Activated CD8-positive, alpha-beta T cell treated with anti-CD3 and anti-CD28 coated beads for 36 hours (primary cell): ENCODE measurements at regions of chr6 and their contacts with region 1.

Region 1: GRCh38 chr6:14734416-14735340 is 511.2 kb upstream of the JARID2 start:
- DNase-seq: peak; percentile 67
- ATAC-seq: peak; percentile 40
- H3K4me3 Mint-ChIP-seq: peak overlapping the region; percentile 56
- H3K27ac Mint-ChIP-seq: peak overlapping the region; percentile 93
- H3K4me1 Mint-ChIP-seq: peaks cover 96% of the 10 kb centered on the region
- H3K27me3 Mint-ChIP-seq: no peaks in the 10 kb centered on the region
- CTCF ChIP-seq: no peak

Region 2: DNA sequence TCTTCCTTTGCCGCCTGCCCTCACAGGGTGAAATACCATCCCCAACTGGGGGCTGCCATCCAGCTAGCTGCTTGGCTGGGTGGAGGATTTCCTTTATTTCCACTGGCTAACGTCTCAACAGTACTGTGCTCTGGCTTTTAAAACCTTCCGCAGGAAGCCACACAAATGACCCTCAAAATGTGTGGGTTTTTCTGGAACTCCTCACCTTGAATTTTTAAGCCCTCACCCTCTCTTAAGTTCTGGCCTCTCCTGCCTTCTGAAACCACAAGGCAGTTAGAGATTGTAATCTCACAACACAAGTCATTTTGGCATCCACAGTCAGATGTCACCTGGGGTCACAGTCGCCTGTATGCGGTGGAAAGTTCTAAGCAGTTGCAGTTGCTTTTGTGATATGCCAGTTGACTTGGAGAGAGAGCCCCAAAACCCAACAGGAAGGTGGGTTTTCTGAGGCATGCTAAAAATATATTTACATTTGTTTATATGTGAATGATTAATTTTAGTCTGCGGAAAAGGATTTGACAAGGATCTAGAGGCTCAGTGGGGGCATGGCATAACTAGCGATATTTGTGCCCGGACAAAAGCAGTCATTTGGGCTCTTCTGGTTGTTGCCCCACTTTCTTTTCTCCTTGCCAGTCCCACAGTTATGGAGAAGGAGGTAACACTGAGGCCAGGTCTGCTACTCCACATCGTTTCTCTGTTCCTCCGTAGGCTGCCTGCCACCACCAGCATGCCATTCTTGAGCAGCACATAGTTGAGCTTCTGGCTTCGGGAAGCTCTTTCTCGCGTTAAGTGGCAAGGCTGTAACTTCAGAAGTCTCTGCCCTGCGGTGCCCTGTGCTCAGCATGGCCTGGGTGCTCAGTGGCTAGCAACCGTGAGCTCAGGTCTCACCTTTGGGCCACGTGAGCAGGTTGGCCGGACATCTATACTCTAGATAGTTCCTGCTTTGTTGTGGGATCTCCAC is 281.8 kb before region 1 on chr6:
- CTCF ChIA-PET with region 1: no interaction called
- POLR2A ChIA-PET with region 1: no interaction called
- intact Hi-C with region 1: loop called (anchors 5 kb)
- DNase-seq: peak; percentile 88
- ATAC-seq: peak; percentile 78
- H3K4me3 Mint-ChIP-seq: peak overlapping the region; percentile 15
- H3K27ac Mint-ChIP-seq: peak overlapping the region; percentile 66
- H3K4me1 Mint-ChIP-seq: peaks cover 63% of the 10 kb centered on the region
- H3K27me3 Mint-ChIP-seq: no peaks in the 10 kb centered on the region
- CTCF ChIP-seq: no peak

Region 3: GRCh38 chr6:14747881-14748520 is 13.3 kb after region 1 on chr6:
- CTCF ChIA-PET with region 1: interaction called, 4 read pairs
- POLR2A ChIA-PET with region 1: interaction called, 27 read pairs
- intact Hi-C with region 1: no loop called
- DNase-seq: peak; percentile 71
- ATAC-seq: peak; percentile 18
- H3K4me3 Mint-ChIP-seq: peak overlapping the region; percentile 15
- H3K27ac Mint-ChIP-seq: peak overlapping the region; percentile 88
- H3K4me1 Mint-ChIP-seq: peaks cover 55% of the 10 kb centered on the region
- H3K27me3 Mint-ChIP-seq: no peaks in the 10 kb centered on the region
- CTCF ChIP-seq: no peak

Region 4: DNA sequence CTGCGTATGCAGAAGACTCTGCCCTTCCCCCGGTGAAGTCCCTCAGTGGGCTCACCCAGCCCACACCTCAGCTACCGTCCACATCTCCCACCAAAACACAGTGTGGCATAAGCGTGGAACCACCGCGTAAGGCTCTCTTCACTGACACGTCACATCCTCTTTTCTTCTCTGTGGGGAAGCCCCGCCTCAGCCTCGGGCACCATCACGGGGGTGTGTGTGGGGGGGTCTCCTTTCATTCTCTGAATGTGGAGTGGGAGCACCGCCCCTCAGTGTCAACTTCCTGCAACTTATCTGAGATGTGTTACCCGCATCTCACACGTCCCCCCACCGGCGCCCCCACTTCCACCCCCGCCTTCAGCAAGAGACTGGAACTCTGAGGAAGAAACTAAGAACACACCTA is 122.8 kb after region 1 on chr6:
- CTCF ChIA-PET with region 1: no interaction called
- POLR2A ChIA-PET with region 1: interaction called, 3 read pairs
- intact Hi-C with region 1: loop called (anchors 5 kb)
- DNase-seq: peak; percentile 93
- ATAC-seq: peak; percentile 90
- H3K4me3 Mint-ChIP-seq: peak overlapping the region; percentile 18
- H3K27ac Mint-ChIP-seq: peak overlapping the region; percentile 88
- H3K4me1 Mint-ChIP-seq: peaks cover 52% of the 10 kb centered on the region
- H3K27me3 Mint-ChIP-seq: no peaks in the 10 kb centered on the region
- CTCF ChIP-seq: no peak

Region 5: GRCh38 chr6:15245361-15246216 is 510.9 kb after region 1 on chr6 and contains the start of gene JARID2:
- CTCF ChIA-PET with region 1: no interaction called
- POLR2A ChIA-PET with region 1: no interaction called
- intact Hi-C with region 1: loop called (anchors 2 kb)
- DNase-seq: peak; percentile 99
- ATAC-seq: peak; percentile 66
- H3K4me3 Mint-ChIP-seq: peak within 1 kb of the TSS; percentile 100
- H3K27ac Mint-ChIP-seq: peak within 1 kb of the TSS; percentile 97
- H3K4me1 Mint-ChIP-seq: peaks cover 18% of the 10 kb centered on the region
- H3K27me3 Mint-ChIP-seq: no peaks in the 10 kb centered on the region
- CTCF ChIP-seq: no peak
- total RNA-seq, gene JARID2: 25.4 to 25.5 TPM